MCF 10A (cell line): ENCODE measurements at regions of chr1 and their contacts with region 1.

Region 1: GRCh38 chr1:202229376-202229775 is 35.8 kb downstream of the LGR6 start:
- DNase-seq: no peak
- H3K4me3 Mint-ChIP-seq: no peak overlapping the region
- H3K27ac Mint-ChIP-seq: no peak overlapping the region
- H3K4me1 Mint-ChIP-seq: peaks cover 15% of the 10 kb centered on the region
- H3K27me3 Mint-ChIP-seq: no peaks in the 10 kb centered on the region
- CTCF ChIP-seq: no peak

Region 2: DNA sequence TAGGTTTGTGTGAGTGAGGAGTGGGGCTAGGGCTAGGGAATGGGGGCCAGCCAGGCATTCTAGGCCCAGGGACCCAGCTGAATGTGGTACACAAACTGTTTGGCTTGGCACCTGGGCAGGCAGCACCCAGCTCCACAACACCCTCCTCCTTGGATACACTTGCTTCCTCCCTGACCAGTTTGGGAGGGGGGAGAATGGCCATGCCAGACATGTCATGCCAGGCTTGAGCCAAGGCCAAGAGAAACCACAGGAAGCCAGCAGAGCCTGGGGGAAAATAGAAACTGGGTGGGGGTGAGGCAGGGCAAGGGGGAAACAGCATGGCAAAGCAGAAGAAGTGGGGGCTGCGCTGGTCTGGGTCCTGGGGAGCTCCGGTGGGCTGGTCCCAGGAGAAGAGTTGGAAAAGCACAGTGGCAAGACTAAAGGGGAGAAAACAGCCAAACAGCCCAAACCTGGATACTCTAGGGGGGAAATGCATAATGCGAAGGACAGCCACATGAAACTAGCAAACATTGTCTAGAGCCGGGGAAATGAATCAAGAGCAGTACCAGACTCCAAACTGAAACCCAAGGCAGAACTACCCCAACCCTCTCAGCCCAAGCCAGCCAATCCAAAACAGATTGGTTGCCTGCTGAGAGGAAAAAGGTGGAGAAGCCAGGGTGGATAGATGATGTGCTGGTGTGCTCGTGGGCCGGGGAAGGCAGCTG is 12.2 kb after region 1 on chr1:
- CTCF ChIA-PET with region 1: interaction called, 40 read pairs
- POLR2A ChIA-PET with region 1: interaction called, 12 read pairs
- intact Hi-C with region 1: no loop called
- DNase-seq: peak; percentile 83
- H3K4me3 Mint-ChIP-seq: peak overlapping the region; percentile 12
- H3K27ac Mint-ChIP-seq: peak overlapping the region; percentile 14
- H3K4me1 Mint-ChIP-seq: peaks cover 33% of the 10 kb centered on the region
- H3K27me3 Mint-ChIP-seq: no peaks in the 10 kb centered on the region
- CTCF ChIP-seq: no peak